ENCODE measurements at regions of chr3 and their contacts with region 1.

Region 1: DNA sequence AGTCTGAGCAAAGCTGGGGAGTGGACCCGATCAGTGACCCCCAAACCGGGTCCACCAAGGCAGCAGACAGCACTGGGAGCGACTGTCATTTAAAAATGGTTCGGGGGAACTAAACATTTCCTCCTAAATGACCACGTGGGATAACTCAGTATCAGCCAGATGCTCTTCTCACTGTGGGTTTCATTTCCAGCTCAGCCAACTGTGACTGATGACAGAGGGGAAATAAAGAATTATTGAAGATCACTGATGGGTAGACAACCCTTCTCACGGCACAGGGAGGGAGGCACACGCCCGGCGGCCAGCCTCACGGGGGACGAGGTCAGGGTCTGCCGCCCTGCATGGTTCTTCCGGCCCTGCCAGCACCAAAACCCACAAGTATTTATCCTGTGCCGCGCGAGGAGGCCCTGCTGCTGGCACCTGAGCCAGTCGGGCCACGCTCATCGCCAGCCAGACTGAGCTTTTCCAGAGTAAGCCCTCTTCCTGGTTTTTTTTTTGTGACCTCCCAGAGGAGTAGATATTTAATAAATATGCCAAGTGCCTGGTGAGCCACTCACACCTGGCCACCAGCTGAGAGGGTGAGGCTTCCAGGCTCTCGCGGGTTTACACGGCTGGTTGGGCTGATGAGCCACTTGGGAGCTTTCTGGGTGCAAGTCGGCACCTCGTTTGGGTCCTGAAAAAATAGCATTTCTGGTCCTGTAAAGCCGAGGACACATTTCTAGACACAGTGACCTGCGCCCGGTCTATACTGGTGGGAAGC is 6.2 kb downstream of the MELTF start:
- DNase-seq: no peak

Region 2: DNA sequence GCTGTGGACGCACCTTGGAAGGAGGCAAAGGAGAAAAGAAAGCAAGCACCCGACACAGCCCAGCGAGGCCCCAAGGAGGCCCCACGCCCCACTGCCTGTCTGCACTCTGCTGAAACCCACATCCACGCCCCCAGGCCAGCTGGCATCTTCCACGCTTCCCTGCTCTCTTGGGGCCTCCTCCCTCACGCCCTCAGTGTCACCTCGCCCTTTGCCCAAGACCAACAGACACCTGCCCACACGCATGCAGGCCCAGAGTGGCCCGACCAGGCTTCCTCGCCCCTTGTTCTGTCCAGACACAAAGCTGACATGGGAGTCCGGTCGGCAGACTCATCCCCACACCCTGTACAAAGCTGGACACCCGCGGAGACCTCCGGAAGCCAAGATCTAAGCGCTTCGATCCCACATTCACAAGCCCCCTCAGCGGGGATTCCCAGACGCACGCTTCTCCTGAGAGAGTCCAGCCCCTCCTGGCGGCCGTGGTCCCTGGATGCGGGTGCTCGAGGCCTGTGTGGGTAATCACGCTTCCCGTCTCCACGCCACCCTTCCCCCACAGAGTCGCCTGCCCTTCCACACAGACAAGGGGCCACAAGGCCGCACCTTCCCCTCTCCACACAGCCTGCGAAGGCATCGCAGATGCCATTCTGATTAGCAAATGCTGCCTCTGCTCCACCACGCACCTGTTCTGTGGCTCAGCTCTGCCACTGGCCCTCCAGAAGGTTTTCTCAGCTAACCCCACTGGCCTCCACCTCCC is 1929.1 kb before region 1 on chr3:
- intact Hi-C with region 1: no loop called
- DNase-seq: peak; percentile 75

Region 3: DNA sequence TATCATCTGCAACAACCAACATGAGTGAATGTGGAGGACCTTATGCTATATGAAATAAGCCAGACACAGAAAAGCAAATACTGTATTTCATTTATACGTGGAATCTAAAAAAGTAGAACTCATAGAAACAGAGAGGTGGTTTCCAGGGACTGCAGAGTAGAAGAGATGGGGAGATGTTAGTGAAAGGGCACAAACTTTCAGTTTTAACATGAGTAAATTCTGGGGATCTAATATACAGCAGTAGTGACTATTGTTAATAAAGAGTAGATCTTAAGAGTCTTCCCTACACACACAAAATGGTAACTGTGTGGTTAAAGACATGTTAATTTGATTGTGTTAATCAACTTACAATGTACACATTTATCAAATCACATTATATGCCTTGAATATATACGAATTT is 27.1 kb after region 1 on chr3:
- intact Hi-C with region 1: loop called in 1 of 2 experiments (anchors 2 kb)
- DNase-seq: no peak